Activated CD4-positive, alpha-beta T cell treated with anti-CD3 and anti-CD28 coated beads for 36 hours (primary cell): ENCODE measurements at regions of chr11 and their contacts with region 1.

Region 1: GRCh38 chr11:123011510-123011909 is 29.9 kb upstream of the BSX start:
- DNase-seq: no peak
- ATAC-seq: no peak
- H3K4me3 Mint-ChIP-seq: no peak overlapping the region
- H3K27ac Mint-ChIP-seq: no peak overlapping the region
- H3K4me1 Mint-ChIP-seq: no peaks in the 10 kb centered on the region
- H3K27me3 Mint-ChIP-seq: peaks cover 4% of the 10 kb centered on the region

Region 2: DNA sequence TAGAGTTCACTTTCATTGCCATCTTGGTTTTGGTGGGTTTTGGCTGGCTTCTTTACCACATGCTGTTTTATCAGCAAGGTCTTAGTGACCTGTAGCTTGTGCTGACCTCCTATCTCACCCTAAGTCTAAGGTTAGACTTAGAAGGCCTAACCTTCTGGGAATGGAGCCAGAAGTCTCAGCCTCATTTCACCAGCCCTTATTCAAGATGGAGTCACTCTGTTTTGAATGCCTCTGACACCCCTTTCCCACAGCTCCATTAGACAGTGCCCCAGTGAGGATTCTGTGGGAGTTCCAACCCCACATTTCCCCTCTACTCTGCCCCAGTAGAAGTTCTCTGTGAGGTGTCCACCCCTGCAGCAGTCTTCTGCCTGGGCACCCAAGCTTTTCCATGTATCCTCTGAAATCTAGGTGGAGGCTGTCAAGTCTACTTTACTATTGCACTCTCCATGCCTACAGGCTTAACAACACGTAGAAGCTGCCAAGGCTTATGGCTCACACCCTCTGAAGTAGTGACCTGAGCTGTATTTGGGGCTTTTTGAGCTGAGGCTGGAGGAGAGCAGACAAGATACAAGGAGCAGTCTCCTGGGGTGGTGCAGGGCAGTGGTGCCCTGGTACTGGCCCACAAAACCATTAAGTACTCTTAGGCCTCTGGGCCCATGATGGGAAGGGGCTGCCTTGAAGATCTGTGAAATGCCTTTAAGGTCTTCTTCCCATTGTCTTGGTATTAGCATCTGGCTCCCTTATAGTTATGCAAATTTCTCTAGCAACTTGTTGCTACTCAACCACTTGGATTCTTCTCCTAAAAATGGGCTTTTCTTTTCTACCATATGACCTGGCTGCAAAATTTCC is 1784.9 kb before region 1 on chr11:
- CTCF ChIA-PET with region 1: no interaction called
- POLR2A ChIA-PET with region 1: interaction called, 10 read pairs
- intact Hi-C with region 1: no loop called
- DNase-seq: no peak
- ATAC-seq: no peak
- H3K4me3 Mint-ChIP-seq: no peak overlapping the region
- H3K27ac Mint-ChIP-seq: no peak overlapping the region
- H3K4me1 Mint-ChIP-seq: no peaks in the 10 kb centered on the region
- H3K27me3 Mint-ChIP-seq: peaks cover 24% of the 10 kb centered on the region